Activated CD8-positive, alpha-beta T cell treated with anti-CD3 and anti-CD28 coated beads, Interleukin-2, amount 10 ng/mL, durations not matched to agents 7 days and 5 days (primary cell): ENCODE measurements at regions of chr3 and their contacts with region 1.

Region 1: GRCh38 chr3:13648060-13649001 is 99.4 kb downstream of the FBLN2 start:
- DNase-seq: peak; percentile 81
- ATAC-seq: peak; percentile 59
- H3K4me3 Mint-ChIP-seq: no peak overlapping the region
- H3K27ac Mint-ChIP-seq: no peak overlapping the region
- H3K4me1 Mint-ChIP-seq: peaks cover 32% of the 10 kb centered on the region
- H3K27me3 Mint-ChIP-seq: peaks cover 35% of the 10 kb centered on the region

Region 2: DNA sequence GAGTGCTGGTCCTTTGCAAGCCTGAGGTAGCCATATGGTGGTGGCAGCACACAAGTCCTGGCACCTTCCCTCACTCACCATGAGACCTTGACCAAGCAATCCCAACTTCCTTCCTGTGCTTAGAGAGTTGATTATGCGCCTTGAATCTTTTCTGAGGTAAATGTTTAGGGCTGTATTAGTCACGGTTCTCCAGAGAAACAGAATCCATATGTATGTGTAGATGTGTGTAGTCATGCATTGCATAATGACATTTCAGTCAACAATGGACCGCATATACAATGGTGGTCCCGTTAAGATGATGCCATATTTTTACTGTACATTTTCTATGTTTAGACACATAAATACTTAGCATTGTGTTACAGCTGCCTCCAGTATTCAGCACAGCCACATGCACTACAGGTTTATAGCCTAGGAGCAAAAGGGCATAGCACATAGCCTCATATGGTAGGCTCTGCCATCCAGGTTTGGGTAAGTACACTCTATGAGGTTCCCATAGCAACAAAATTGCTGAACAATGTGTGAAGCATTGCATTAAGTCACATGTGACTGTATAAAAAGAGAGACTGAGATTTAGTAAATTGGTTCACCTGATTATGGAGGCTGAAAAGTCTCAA is 208.0 kb before region 1 on chr3:
- CTCF ChIA-PET with region 1: no interaction called
- POLR2A ChIA-PET with region 1: no interaction called
- DNase-seq: no peak
- ATAC-seq: no peak
- H3K4me3 Mint-ChIP-seq: no peak overlapping the region
- H3K27ac Mint-ChIP-seq: no peak overlapping the region
- H3K4me1 Mint-ChIP-seq: no peaks in the 10 kb centered on the region
- H3K27me3 Mint-ChIP-seq: peaks cover 12% of the 10 kb centered on the region

Region 3: DNA sequence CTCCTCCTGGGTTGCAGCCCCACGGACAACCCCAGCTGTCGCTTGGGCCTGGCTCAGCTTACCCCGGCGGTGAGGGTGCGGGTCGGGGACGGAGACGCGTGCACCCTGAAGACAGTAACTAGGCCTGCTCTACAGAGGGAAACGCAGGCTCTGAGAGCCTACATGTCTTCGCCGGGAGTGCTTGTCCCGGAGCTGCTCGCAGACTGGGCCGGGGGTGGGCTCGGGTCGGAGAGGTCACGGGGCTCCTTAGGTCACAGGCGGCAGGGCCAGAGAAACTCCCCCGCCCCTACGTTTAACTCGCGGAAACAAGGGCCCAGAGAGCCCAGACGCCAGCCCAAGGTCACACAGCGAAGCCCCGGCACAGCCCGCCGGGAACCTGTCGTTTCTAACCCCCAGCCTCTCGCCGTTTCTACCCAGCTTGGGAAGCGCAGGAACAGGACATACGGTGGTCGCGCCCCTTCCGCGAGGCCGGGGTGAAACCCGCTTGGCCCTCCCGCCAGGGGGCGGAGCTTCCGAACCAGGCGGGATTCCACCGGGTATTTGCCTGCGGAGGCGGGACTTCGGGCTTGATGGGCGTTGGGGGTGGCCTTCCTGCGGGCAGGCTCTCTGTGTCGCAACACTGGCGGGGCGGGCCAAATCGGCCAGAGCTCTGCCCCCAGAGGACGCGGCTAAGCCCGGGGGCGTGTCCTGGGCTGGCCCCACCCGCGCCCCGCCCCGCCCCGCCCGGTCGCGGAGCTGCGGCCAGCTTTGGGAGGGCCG is 168.6 kb before region 1 on chr3 and contains the start of gene HDAC11:
- CTCF ChIA-PET with region 1: interaction called, 13 read pairs
- POLR2A ChIA-PET with region 1: interaction called, 3 read pairs
- DNase-seq: peak; percentile 98
- ATAC-seq: peak; percentile 98
- H3K4me3 Mint-ChIP-seq: peak within 1 kb of the TSS; percentile 90
- H3K27ac Mint-ChIP-seq: peak within 1 kb of the TSS; percentile 87
- H3K4me1 Mint-ChIP-seq: peaks cover 20% of the 10 kb centered on the region
- H3K27me3 Mint-ChIP-seq: peaks cover 3% of the 10 kb centered on the region
- total RNA-seq, gene HDAC11: 0.87 to 0.99 TPM

Region 4: GRCh38 chr3:13495921-13496723 is 152.2 kb before region 1 on chr3:
- CTCF ChIA-PET with region 1: interaction called, 374 read pairs
- POLR2A ChIA-PET with region 1: interaction called, 4 read pairs
- DNase-seq: peak; percentile 84
- ATAC-seq: peak; percentile 83
- H3K4me3 Mint-ChIP-seq: no peak overlapping the region
- H3K27ac Mint-ChIP-seq: no peak overlapping the region
- H3K4me1 Mint-ChIP-seq: peaks cover 9% of the 10 kb centered on the region
- H3K27me3 Mint-ChIP-seq: no peaks in the 10 kb centered on the region

Region 5: DNA sequence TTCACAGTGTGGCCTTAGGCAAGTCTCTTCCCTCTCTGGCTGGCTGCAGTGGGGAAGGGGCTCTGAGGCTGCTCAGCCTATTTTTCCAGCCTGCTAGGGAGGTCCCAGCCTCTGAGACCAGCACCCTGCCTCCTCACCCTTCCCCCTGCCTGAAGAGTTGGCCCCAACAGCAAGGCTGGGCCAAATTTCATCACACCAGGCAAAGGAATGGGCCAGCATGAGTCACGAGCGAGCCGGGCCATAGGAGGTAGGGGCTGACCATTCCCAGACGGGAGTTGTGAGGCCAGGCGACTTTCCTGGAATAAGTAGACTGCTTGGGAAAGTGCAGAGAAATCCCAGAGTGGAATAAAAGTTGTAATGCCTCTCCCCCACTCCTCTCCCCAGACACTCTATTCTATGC is 105.1 kb before region 1 on chr3:
- CTCF ChIA-PET with region 1: interaction called, 12 read pairs
- POLR2A ChIA-PET with region 1: no interaction called
- DNase-seq: no peak
- ATAC-seq: no peak
- H3K4me3 Mint-ChIP-seq: no peak overlapping the region
- H3K27ac Mint-ChIP-seq: no peak overlapping the region
- H3K4me1 Mint-ChIP-seq: peaks cover 36% of the 10 kb centered on the region
- H3K27me3 Mint-ChIP-seq: peaks cover 32% of the 10 kb centered on the region

Region 6: GRCh38 chr3:13711906-13712650 is 63.7 kb after region 1 on chr3:
- CTCF ChIA-PET with region 1: no interaction called
- POLR2A ChIA-PET with region 1: no interaction called
- DNase-seq: no peak
- ATAC-seq: no peak
- H3K4me3 Mint-ChIP-seq: no peak overlapping the region
- H3K27ac Mint-ChIP-seq: no peak overlapping the region
- H3K4me1 Mint-ChIP-seq: no peaks in the 10 kb centered on the region
- H3K27me3 Mint-ChIP-seq: no peaks in the 10 kb centered on the region

Region 7: DNA sequence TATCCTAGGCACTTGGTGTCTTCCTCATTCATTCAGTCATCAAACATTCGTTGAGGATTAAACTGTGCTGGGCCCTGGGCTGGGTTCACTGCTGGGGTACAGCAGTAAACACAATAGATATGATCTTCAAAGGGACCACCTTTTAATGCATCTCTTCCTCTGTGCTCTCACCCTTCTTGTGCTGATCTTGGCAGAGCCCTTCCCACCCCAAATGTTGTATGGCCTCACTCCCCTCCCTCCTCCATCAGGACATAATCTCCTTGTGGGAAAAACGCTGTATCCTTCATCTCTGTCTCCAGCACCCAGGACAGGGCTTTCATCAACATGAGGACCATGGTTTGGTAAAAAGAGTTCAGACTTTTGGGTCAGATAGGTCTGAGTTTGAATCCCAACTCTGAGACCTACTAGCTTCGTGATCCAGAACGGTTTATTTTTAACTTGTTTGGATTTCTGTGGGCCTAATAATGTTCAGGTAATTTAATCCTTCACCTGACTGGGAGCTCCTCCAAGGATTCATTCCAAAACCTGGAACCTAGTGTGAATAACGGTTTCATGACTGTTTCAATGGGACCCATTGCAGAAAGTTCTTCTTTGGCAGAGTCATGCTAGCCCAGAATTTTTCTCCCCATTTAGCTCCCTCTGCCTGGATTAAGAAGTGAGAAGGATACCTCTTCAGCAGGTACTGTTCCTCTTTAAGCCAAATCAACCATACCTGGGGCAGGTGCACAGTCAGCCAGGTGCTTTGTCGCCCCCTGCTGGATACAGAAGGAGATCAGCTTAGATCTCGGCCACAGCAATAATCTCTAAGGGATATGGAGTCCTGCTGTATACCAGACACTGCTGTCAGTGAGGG is 236.7 kb after region 1 on chr3:
- CTCF ChIA-PET with region 1: interaction called, 387 read pairs
- POLR2A ChIA-PET with region 1: no interaction called
- DNase-seq: peak; percentile 81
- ATAC-seq: peak; percentile 73
- H3K4me3 Mint-ChIP-seq: no peak overlapping the region
- H3K27ac Mint-ChIP-seq: no peak overlapping the region
- H3K4me1 Mint-ChIP-seq: peaks cover 6% of the 10 kb centered on the region
- H3K27me3 Mint-ChIP-seq: peaks cover 44% of the 10 kb centered on the region